ENCODE measurements at regions of chr5 and their contacts with region 1.

Region 1: DNA sequence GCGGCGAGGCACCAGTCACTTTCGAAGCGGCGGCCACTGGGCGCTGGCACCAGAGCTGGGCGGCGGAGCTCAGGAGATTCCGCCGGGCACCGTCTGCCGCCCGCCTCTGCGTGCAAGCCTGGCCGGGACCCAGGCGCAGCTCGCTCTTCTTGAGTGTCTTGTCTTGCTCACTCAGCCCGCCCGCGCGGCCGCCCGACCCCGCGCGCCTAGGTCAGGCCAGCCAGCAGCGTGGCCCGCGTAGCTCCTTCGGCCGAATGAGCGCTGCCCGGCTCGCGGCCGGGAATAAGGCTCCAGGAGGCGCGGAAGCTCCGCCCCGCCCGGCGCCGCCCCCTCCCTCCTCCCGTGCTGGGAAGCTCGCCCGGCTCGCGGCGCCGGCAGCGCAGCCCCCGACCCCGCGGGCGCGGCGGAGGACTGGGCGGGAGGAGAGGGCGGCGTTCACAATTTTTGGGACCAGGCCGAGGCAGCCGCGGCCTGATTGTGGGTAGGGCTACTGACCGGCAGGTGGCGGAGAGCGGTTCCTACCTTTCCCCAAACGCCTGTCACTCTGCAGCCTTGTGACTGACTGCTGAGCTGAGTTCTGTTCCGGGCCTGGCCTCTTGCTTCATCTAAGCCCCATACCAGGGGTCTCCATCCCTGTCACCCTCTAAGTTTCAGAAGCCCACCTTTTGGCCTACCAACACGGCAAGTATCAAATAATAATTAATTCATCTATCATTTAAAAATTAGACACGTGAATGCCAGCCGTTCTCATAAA is at the start of gene HBEGF:
- DNase-seq: no peak
- H3K4me3 ChIP-seq: peak within 1 kb of the TSS; percentile 65 to 87 (median 77)
- H3K27ac ChIP-seq: peak within 1 kb of the TSS; percentile 76 to 88 (median 86)
- H3K4me1 ChIP-seq: peaks cover 52 to 66% (median 59%) of the 10 kb centered on the region in 4 donors
- H3K27me3 ChIP-seq: no peaks in the 10 kb centered on the region
- CTCF ChIP-seq: peak; percentile 18 to 50 (median 37)
- EP300 ChIP-seq: no peak
- POLR2A ChIP-seq: peak; percentile 76
- total RNA-seq, gene HBEGF: 6.6 to 20.0 (median 8.2) TPM

Region 2: GRCh38 chr5:140223567-140223966 is 123.0 kb before region 1 on chr5:
- intact Hi-C with region 1: no loop called
- DNase-seq: no peak
- H3K4me3 ChIP-seq: no peak overlapping the region
- H3K27ac ChIP-seq: no peak overlapping the region
- H3K4me1 ChIP-seq: peaks cover 48 to 67% (median 56%) of the 10 kb centered on the region in 4 donors
- H3K27me3 ChIP-seq: no peaks in the 10 kb centered on the region
- CTCF ChIP-seq: no peak
- EP300 ChIP-seq: no peak
- POLR2A ChIP-seq: no peak

Region 3: DNA sequence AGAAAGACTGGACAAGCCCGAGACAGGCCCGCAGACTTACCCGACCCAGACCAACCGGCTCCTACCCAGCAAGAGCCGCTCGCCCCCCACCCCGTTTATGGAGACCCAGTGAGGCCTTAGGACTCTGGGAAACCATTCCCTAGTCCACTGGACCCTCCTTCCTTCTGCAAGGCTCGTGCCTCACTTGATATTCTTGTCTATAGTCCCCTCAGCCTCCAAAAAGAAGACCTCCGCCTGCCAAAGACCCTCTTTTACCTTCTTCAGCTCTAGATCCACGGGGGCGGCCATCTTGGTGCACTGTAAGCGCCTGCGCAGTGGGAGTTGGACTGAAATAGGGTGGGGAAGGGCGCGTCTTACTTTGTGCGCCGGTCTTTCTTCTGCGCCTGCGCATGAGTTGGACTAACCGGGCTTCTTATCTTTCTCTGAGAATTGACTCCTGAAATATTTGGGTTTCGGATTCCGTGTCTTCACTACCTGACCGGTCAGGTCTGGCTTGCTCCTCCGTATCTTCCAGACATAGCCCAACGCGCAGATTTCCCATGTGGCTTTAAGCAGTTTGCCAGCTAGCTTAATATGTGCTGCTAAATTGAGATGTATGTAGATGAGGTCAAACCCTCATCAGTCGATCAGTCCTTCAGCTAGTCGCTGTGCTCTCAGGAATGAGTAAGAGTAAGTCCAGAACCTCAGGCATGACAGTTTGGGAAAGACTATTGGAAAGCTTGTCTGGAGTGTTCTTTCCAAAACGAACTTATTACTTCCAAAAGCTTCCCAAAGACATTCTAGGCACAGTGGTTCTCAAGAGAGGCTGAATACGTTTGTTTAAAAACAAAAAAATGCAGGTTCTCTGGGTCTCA is 43.5 kb before region 1 on chr5 and contains the start of gene PFDN1:
- intact Hi-C with region 1: loop called (anchors 5 kb)
- DNase-seq: peak; percentile 98
- H3K4me3 ChIP-seq: peak within 1 kb of the TSS; percentile 64 to 83 (median 78)
- H3K27ac ChIP-seq: peak within 1 kb of the TSS; percentile 82 to 87 (median 85)
- H3K4me1 ChIP-seq: peaks cover 33 to 50% (median 43%) of the 10 kb centered on the region in 4 donors
- H3K27me3 ChIP-seq: no peaks in the 10 kb centered on the region
- CTCF ChIP-seq: no peak
- EP300 ChIP-seq: no peak
- POLR2A ChIP-seq: peak; percentile 23
- total RNA-seq, gene PFDN1: 84.8 to 126 (median 101) TPM

Region 4: DNA sequence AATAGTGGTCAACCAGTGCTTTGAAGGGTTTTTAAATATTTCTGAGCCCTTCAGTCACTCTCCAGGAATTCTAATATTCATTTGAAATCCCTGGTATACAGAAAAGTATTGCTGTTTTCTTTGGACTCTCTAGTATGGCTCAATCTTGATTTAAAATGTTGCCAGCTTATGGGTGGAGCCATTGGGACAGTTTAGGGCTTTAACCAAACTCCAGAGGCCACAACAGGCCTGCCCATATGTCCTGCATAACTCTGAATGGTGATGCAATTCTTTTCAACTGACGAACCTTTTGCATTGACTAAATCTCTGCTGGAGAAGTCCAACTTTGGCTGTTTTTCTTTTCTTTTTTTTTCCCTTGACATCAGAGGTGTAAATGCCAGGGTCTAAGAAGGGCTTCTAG is 44.8 kb after region 1 on chr5:
- intact Hi-C with region 1: no loop called
- DNase-seq: no peak
- H3K4me3 ChIP-seq: no peak overlapping the region
- H3K27ac ChIP-seq: no peak overlapping the region
- H3K4me1 ChIP-seq: no peaks in the 10 kb centered on the region
- H3K27me3 ChIP-seq: no peaks in the 10 kb centered on the region
- CTCF ChIP-seq: no peak
- EP300 ChIP-seq: no peak
- POLR2A ChIP-seq: no peak